ENCODE measurements at regions of chrX and their contacts with region 1.

Region 1: GRCh38 chrX:44898411-44899221 is 25.6 kb downstream of the KDM6A start:
- DNase-seq: no peak
- H3K4me3 Mint-ChIP-seq: no peak overlapping the region
- H3K27ac Mint-ChIP-seq: peak overlapping the region; percentile 87
- H3K4me1 Mint-ChIP-seq: peaks cover 35% of the 10 kb centered on the region
- H3K27me3 Mint-ChIP-seq: no peaks in the 10 kb centered on the region

Region 2: GRCh38 chrX:44922980-44923379 is 24.4 kb after region 1 on chrX:
- intact Hi-C with region 1: loop called (anchors 2 kb)
- DNase-seq: no peak
- H3K4me3 Mint-ChIP-seq: peak overlapping the region; percentile 40
- H3K27ac Mint-ChIP-seq: peak overlapping the region; percentile 42
- H3K4me1 Mint-ChIP-seq: peaks cover 30% of the 10 kb centered on the region
- H3K27me3 Mint-ChIP-seq: no peaks in the 10 kb centered on the region

Region 3: DNA sequence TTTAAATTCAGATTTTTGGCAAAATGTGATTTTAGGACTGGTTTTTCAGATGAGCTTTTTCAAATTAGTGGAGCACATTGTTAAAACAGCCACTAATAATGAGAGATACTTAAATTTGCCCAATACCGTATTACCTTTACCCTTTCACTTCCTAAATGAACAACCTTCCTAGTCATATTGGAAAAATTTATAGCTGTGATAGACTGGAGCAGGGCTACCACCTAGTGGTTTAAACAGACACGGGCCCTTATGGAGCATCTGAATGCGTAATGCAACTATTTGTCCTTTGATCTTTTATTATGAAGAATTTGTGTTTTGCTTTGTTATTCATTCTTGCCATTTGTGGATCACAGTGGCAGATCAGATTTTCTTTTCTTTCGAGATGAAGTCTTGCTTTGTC is 47.1 kb after region 1 on chrX:
- intact Hi-C with region 1: loop called (anchors 5 kb)
- DNase-seq: no peak
- H3K4me3 Mint-ChIP-seq: no peak overlapping the region
- H3K27ac Mint-ChIP-seq: no peak overlapping the region
- H3K4me1 Mint-ChIP-seq: peaks cover 13% of the 10 kb centered on the region
- H3K27me3 Mint-ChIP-seq: no peaks in the 10 kb centered on the region

Region 4: DNA sequence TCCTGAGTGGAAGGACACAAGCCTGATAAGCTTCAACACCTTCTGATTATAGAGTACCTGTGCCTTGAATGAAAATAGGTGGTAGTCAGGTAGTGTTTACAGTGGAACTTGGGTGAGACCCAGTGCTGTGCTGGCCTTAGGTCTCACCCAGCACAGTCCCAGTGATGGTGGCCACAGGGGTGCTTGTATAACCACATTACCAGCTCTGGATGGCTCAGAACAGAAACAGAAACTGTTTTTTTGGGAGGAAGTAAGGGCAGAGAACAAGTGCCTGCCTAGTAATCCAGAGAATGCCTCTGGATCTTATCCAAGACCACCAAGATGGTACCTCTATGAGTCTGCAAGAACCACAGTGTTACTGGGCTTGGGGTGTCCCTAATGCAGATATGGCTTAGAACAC is 473.5 kb after region 1 on chrX:
- intact Hi-C with region 1: no loop called
- DNase-seq: no peak
- H3K4me3 Mint-ChIP-seq: no peak overlapping the region
- H3K27ac Mint-ChIP-seq: no peak overlapping the region
- H3K4me1 Mint-ChIP-seq: no peaks in the 10 kb centered on the region
- H3K27me3 Mint-ChIP-seq: no peaks in the 10 kb centered on the region

Measured in activated T-helper 1 cell treated with anti-CD3 and anti-CD28 coated beads, Interleukin-12 subunit alpha, Interleukin-12 subunit beta, Interleukin-2, Interleukin-4 antibody, amounts not matched to agents 30 ng/mL and 10 ng/mL and 1 ng/mL, durations not matched to agents 14 hours and 24 hours and 36 hours (primary cell).